ENCODE measurements at regions of chr4 and their contacts with region 1.

Region 1: DNA sequence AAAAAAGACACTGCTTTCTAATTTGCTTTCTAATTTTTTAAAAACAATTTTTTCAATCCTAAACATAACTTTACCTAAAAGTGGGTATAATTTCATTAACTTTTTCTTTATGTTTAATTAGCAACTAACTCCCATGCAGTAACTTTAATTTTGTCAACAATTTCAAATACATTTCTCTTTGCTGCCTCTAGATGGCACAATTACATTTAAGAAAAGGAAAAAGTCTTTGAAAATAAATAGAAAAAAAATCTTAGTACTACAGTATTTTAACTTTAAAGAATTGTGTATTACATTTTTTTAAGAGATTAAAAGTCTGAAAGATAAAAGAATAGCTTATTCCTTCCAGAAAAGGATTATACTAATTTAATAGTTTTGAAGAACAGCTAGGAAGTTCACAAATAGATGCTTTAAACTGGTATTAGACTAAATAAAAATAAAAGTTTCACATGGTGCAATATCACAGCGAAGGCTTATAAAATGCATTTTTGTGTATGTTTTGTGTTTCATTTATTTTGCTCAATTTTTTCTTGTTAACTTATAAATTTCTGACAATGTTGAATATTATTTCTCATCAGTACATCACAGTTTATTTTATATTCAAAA is 105.1 kb downstream of the ADGRA3 start:
- DNase-seq: no peak
- ATAC-seq: no peak
- H3K4me3 ChIP-seq: no peak overlapping the region
- H3K27ac ChIP-seq: no peak overlapping the region
- H3K4me1 ChIP-seq: no peaks in the 10 kb centered on the region
- H3K27me3 ChIP-seq: no peaks in the 10 kb centered on the region

Region 2: GRCh38 chr4:22607382-22607781 is 196.6 kb after region 1 on chr4:
- intact Hi-C with region 1: loop called (anchors 5 kb)
- DNase-seq: peak; percentile 42 to 75 (median 71)
- ATAC-seq: peak; percentile 92 to 97
- H3K4me3 ChIP-seq: no peak overlapping the region
- H3K27ac ChIP-seq: no peak overlapping the region
- H3K4me1 ChIP-seq: no peaks in the 10 kb centered on the region
- H3K27me3 ChIP-seq: no peaks in the 10 kb centered on the region

Region 3: GRCh38 chr4:22634541-22635181 is 223.9 kb after region 1 on chr4:
- intact Hi-C with region 1: no loop called
- DNase-seq: peak in 1 of 3 donors; percentile 30
- ATAC-seq: peak in 1 of 2 donors; percentile 26
- H3K4me3 ChIP-seq: no peak overlapping the region
- H3K27ac ChIP-seq: no peak overlapping the region
- H3K4me1 ChIP-seq: no peaks in the 10 kb centered on the region
- H3K27me3 ChIP-seq: no peaks in the 10 kb centered on the region

Measured in right cardiac atrium (tissue), 5 donors.